Activated T-helper 1 cell treated with anti-CD3 and anti-CD28 coated beads, Interleukin-12 subunit alpha, Interleukin-12 subunit beta, Interleukin-2, Interleukin-4 antibody, amounts not matched to agents 30 ng/mL and 10 ng/mL and 1 ng/mL, durations not matched to agents 14 hours and 24 hours and 36 hours (primary cell): ENCODE measurements at regions of chr4 and their contacts with region 1.

Region 1: GRCh38 chr4:56723201-56723605 is 42.1 kb upstream of the HOPX start:
- DNase-seq: peak; percentile 8
- H3K4me3 Mint-ChIP-seq: no peak overlapping the region
- H3K27ac Mint-ChIP-seq: peak overlapping the region; percentile 11
- H3K4me1 Mint-ChIP-seq: peaks cover 24% of the 10 kb centered on the region
- H3K27me3 Mint-ChIP-seq: no peaks in the 10 kb centered on the region

Region 2: DNA sequence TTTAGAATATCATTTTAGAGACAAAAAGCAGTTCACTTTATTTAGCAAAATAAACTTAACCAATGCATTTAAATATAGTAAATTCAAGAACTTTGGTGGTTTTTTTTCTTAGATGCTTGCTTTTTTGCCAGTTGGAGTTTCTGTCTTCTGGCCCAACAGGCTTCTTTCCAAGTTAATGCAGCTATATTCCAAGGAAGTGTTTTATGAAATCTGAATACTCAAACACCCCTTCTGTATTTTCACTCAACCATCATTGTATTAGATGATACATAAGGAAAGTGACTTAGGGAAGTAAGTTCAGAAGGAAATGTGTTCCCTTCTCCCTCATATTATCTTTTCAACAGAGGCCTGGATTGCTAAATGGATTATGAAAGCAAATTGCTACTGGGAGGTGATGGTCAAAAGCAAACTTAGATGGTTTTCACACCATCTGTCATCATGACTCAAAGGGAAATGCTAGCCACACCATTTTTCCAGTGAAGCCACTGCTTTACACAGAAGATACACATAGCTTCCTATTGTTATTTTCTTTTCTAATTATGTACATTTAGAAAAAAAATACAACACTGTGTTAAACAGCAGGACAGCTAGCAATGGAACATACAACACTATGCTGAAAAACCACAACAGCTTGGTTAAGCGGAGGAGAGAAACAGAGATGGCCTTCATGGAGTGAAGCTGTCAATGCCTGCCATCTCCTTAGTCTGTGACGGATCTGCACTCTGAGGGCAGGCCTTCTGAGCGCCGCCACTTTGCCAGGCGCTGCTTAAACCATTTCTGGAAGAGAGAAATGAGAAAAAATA is 75.0 kb before region 1 on chr4:
- intact Hi-C with region 1: loop called (anchors 2 kb)
- DNase-seq: no peak
- H3K4me3 Mint-ChIP-seq: peak overlapping the region; percentile 50
- H3K27ac Mint-ChIP-seq: peak overlapping the region; percentile 87
- H3K4me1 Mint-ChIP-seq: peaks cover 62% of the 10 kb centered on the region
- H3K27me3 Mint-ChIP-seq: peaks cover 2% of the 10 kb centered on the region

Region 3: GRCh38 chr4:56757821-56758411 is 34.7 kb after region 1 on chr4:
- intact Hi-C with region 1: loop called (anchors 5 kb)
- DNase-seq: peak; percentile 70
- H3K4me3 Mint-ChIP-seq: peak overlapping the region; percentile 74
- H3K27ac Mint-ChIP-seq: peak overlapping the region; percentile 98
- H3K4me1 Mint-ChIP-seq: peaks cover 48% of the 10 kb centered on the region
- H3K27me3 Mint-ChIP-seq: peaks cover 2% of the 10 kb centered on the region

Region 4: DNA sequence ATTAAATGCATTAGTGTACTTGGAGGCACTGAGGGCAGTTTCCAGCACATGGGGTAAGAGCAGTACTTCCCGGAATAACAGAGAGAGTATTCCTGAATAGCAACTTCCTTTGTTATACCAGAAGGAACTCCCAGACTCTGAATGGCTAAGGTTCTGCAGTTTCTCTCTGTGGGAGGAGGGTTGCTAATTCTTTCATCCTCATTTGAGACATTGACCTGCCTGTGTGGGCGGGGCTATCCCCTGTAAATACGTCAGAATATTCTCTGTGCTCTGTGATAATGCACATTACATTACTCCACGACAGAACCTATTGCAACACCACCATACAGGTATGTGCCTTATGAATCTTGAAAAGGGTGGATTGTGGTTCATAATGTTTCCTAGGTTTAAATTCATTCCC is 45.6 kb after region 1 on chr4:
- intact Hi-C with region 1: no loop called
- DNase-seq: no peak
- H3K4me3 Mint-ChIP-seq: no peak overlapping the region
- H3K27ac Mint-ChIP-seq: no peak overlapping the region
- H3K4me1 Mint-ChIP-seq: no peaks in the 10 kb centered on the region
- H3K27me3 Mint-ChIP-seq: peaks cover 6% of the 10 kb centered on the region